ENCODE measurements at regions of chr9 and their contacts with region 1.

Region 1: GRCh38 chr9:18268381-18268780 is 205.6 kb upstream of the ADAMTSL1 start:
- DNase-seq: no peak
- ATAC-seq: peak; percentile 69 to 83
- H3K4me3 ChIP-seq: no peak overlapping the region
- H3K27ac ChIP-seq: no peak overlapping the region
- H3K4me1 ChIP-seq: no peaks in the 10 kb centered on the region
- H3K27me3 ChIP-seq: no peaks in the 10 kb centered on the region

Region 2: GRCh38 chr9:18215626-18216025 is 52.8 kb before region 1 on chr9:
- intact Hi-C with region 1: no loop called
- DNase-seq: no peak
- ATAC-seq: no peak
- H3K4me3 ChIP-seq: no peak overlapping the region
- H3K27ac ChIP-seq: no peak overlapping the region
- H3K4me1 ChIP-seq: no peaks in the 10 kb centered on the region
- H3K27me3 ChIP-seq: no peaks in the 10 kb centered on the region

Region 3: DNA sequence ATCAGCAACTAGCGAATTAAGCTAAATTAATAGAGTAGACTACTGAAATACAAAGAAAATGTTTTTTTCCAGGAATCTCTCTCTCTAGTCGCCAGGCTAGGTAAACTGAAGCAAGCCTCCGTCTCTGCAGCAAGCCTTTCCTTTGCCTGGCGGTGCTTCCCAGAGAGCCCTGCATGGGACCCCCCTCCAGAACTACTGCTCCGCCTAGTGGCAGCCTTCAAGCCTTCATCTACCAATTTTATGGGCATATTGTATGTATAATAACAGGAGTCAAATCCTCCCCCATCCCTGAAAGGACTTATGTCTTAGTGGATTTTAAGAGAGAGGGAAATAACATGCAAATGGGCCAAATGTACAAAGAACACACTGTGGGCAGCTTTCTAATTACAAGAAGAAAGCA is 522.7 kb after region 1 on chr9:
- intact Hi-C with region 1: loop called in 1 of 4 experiments (anchors 10 kb)
- DNase-seq: no peak
- ATAC-seq: no peak
- H3K4me3 ChIP-seq: no peak overlapping the region
- H3K27ac ChIP-seq: no peak overlapping the region
- H3K4me1 ChIP-seq: no peaks in the 10 kb centered on the region
- H3K27me3 ChIP-seq: no peaks in the 10 kb centered on the region

Measured in right cardiac atrium (tissue), 5 donors.